PC-9 (cell line): ENCODE measurements at regions of chr3 and their contacts with region 1.

Region 1: GRCh38 chr3:103813957-103814356 is 1379.1 kb downstream of the ZPLD1 start:
- DNase-seq: no peak
- H3K4me3 ChIP-seq: no peak overlapping the region
- H3K27ac ChIP-seq: no peak overlapping the region
- H3K4me1 ChIP-seq: no peaks in the 10 kb centered on the region
- H3K27me3 ChIP-seq: no peaks in the 10 kb centered on the region
- CTCF ChIP-seq: no peak

Region 2: DNA sequence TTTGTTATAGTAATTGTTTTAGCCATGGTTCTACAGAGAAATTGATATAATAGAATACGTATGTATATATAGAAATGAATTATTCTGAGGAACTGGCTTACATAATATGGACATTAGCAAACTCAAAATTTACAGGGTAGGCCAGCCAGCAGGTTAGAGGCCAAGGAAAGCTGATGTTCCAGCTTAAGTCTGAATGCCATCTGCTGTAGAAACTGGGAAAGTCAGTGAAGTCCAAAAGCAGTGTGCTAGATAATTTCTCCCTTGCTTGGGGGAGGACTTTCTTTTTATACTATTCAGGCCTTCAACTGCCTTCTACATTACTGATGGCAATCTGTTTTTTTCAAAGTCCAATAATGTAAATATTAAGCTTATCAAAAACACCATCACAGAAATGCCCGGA is 204.5 kb before region 1 on chr3:
- CTCF ChIA-PET with region 1: no interaction called
- POLR2A ChIA-PET with region 1: no interaction called
- intact Hi-C with region 1: no loop called
- DNase-seq: no peak
- H3K4me3 ChIP-seq: no peak overlapping the region
- H3K27ac ChIP-seq: no peak overlapping the region
- H3K4me1 ChIP-seq: no peaks in the 10 kb centered on the region
- H3K27me3 ChIP-seq: no peaks in the 10 kb centered on the region
- CTCF ChIP-seq: no peak

Region 3: DNA sequence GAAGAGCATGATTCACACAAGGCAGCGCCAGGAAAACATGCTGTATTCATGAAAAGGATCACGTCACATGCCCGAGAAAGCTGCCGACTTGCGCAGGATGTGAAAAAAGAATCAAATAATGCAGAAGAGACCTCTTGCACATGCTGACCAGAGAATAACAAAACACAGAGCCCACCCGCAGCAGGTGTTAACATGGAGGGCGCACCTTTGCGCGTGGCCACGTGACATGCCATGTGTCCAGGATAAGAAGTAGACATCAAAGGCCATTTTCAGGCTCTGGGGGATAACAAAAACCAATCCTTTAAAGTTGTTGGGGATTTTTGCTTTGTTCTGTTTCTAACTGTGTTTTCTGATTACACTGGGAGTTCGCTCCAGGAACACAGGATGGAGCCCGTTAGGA is 46.3 kb before region 1 on chr3:
- CTCF ChIA-PET with region 1: no interaction called
- POLR2A ChIA-PET with region 1: no interaction called
- intact Hi-C with region 1: no loop called
- DNase-seq: no peak
- H3K4me3 ChIP-seq: no peak overlapping the region
- H3K27ac ChIP-seq: no peak overlapping the region
- H3K4me1 ChIP-seq: no peaks in the 10 kb centered on the region
- H3K27me3 ChIP-seq: no peaks in the 10 kb centered on the region
- CTCF ChIP-seq: no peak

Region 4: GRCh38 chr3:103873897-103874545 is 60.1 kb after region 1 on chr3:
- CTCF ChIA-PET with region 1: no interaction called
- POLR2A ChIA-PET with region 1: interaction called, 11 read pairs
- intact Hi-C with region 1: no loop called
- DNase-seq: no peak
- H3K4me3 ChIP-seq: no peak overlapping the region
- H3K27ac ChIP-seq: no peak overlapping the region
- H3K4me1 ChIP-seq: no peaks in the 10 kb centered on the region
- H3K27me3 ChIP-seq: no peaks in the 10 kb centered on the region
- CTCF ChIP-seq: no peak